ENCODE measurements at regions of chr1 and their contacts with region 1.

Region 1: GRCh38 chr1:74689621-74690363 is 16.2 kb upstream of the ERICH3 start:
- DNase-seq: peak; percentile 51
- ATAC-seq: peak; percentile 80
- H3K4me3 Mint-ChIP-seq: peak overlapping the region; percentile 4; the same call in 1 of the 2 replicates
- H3K27ac Mint-ChIP-seq: peak overlapping the region; percentile 40
- H3K4me1 Mint-ChIP-seq: peaks cover 12% of the 10 kb centered on the region
- H3K27me3 Mint-ChIP-seq: no peaks in the 10 kb centered on the region
- CTCF ChIP-seq: peak; percentile 77

Region 2: GRCh38 chr1:74468982-74469603 is 220.7 kb before region 1 on chr1:
- CTCF ChIA-PET with region 1: interaction called, 18 read pairs
- POLR2A ChIA-PET with region 1: no interaction called
- DNase-seq: no peak
- ATAC-seq: peak; percentile 49; the same call in 1 of the 2 replicates
- H3K4me3 Mint-ChIP-seq: no peak overlapping the region
- H3K27ac Mint-ChIP-seq: no peak overlapping the region
- H3K4me1 Mint-ChIP-seq: peaks cover 34% of the 10 kb centered on the region
- H3K27me3 Mint-ChIP-seq: no peaks in the 10 kb centered on the region
- CTCF ChIP-seq: peak; percentile 34

Region 3: GRCh38 chr1:74504125-74504932 is 185.5 kb before region 1 on chr1:
- CTCF ChIA-PET with region 1: interaction called, 10 read pairs
- POLR2A ChIA-PET with region 1: no interaction called
- DNase-seq: peak; percentile 81
- ATAC-seq: peak; percentile 86
- H3K4me3 Mint-ChIP-seq: peak overlapping the region; percentile 50
- H3K27ac Mint-ChIP-seq: peak overlapping the region; percentile 81; the same call in 1 of the 2 replicates
- H3K4me1 Mint-ChIP-seq: peaks cover 41% of the 10 kb centered on the region
- H3K27me3 Mint-ChIP-seq: no peaks in the 10 kb centered on the region
- CTCF ChIP-seq: peak; percentile 62

Region 4: GRCh38 chr1:74620242-74620641 is 69.5 kb before region 1 on chr1:
- CTCF ChIA-PET with region 1: no interaction called
- POLR2A ChIA-PET with region 1: no interaction called
- DNase-seq: no peak
- ATAC-seq: no peak
- H3K4me3 Mint-ChIP-seq: no peak overlapping the region
- H3K27ac Mint-ChIP-seq: no peak overlapping the region
- H3K4me1 Mint-ChIP-seq: no peaks in the 10 kb centered on the region
- H3K27me3 Mint-ChIP-seq: no peaks in the 10 kb centered on the region; the same call in 1 of the 2 replicates
- CTCF ChIP-seq: no peak

Region 5: GRCh38 chr1:74673351-74674111 is 16.3 kb before region 1 on chr1 and contains the start of gene ERICH3:
- CTCF ChIA-PET with region 1: interaction called, 31 read pairs
- POLR2A ChIA-PET with region 1: no interaction called
- DNase-seq: peak; percentile 39
- ATAC-seq: peak; percentile 82
- H3K4me3 Mint-ChIP-seq: peak within 1 kb of the TSS; percentile 65
- H3K27ac Mint-ChIP-seq: no peak within 1 kb of the TSS
- H3K4me1 Mint-ChIP-seq: peaks cover 21% of the 10 kb centered on the region
- H3K27me3 Mint-ChIP-seq: peaks cover 32% of the 10 kb centered on the region
- CTCF ChIP-seq: no peak
- total RNA-seq, gene ERICH3: 0.07 TPM in 1 of 3 replicates, not detected in the others

Region 6: GRCh38 chr1:74733604-74734484 is 44.1 kb after region 1 on chr1:
- CTCF ChIA-PET with region 1: interaction called, 19 read pairs
- POLR2A ChIA-PET with region 1: no interaction called
- DNase-seq: no peak
- ATAC-seq: peak; percentile 54
- H3K4me3 Mint-ChIP-seq: peak overlapping the region; percentile 92
- H3K27ac Mint-ChIP-seq: peak overlapping the region; percentile 100
- H3K4me1 Mint-ChIP-seq: peaks cover 34% of the 10 kb centered on the region
- H3K27me3 Mint-ChIP-seq: no peaks in the 10 kb centered on the region
- CTCF ChIP-seq: no peak; the same call in 1 of the 2 replicates